ENCODE measurements at regions of chr3 and their contacts with region 1.

Region 1: GRCh38 chr3:98602078-98602678 is 8.8 kb upstream of the CPOX start:
- DNase-seq: peak; percentile 33
- H3K4me3 Mint-ChIP-seq: no peak overlapping the region
- H3K27ac Mint-ChIP-seq: no peak overlapping the region
- H3K4me1 Mint-ChIP-seq: no peaks in the 10 kb centered on the region
- H3K27me3 Mint-ChIP-seq: no peaks in the 10 kb centered on the region
- CTCF ChIP-seq: peak; percentile 47

Region 2: DNA sequence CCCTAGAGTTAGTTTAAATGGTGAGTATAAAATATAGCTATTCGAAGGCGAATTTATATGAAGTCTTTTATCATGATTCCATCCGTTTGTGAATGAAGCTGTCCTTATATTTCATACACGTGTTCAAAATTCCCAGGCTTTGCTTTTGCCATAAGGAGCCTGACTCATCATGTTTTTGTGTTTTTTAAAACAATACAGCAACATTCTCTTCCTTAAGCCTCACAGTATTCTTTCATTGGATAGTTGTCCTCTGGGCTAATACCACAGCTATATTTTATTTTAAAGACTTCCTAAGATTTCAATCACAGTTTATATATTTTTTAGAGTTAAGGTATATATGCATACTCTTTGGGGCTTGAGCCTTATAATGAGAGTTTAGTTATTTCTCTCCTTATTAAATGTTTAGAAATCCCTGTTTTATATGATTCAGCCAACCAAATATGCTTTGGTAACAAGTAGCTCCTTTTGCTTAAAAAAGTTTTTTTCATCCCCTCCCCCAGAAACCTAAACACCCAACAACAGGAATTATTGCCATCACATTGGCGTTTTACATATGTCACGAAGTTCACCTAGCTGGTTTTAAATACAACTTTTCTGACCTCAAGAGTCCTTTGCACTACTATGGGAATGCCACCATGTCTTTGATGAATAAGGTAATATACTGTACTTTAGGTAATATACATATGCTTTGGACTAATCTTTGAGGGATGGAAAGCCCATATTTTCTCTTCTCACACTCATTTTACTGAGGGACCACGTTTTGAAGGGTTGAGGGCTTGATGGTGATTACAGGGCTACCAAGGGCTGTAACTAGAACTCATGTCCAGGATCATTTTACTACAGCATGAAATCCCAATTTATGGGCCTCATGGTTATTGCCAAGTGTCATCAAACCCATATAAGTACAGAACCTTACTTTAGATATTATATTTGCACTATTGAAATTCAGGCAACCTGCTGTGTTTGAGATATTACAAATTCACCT is 189.5 kb after region 1 on chr3:
- CTCF ChIA-PET with region 1: no interaction called
- intact Hi-C with region 1: loop called (anchors 5 kb)
- DNase-seq: no peak
- H3K4me3 Mint-ChIP-seq: no peak overlapping the region
- H3K27ac Mint-ChIP-seq: peak overlapping the region; percentile 78
- H3K4me1 Mint-ChIP-seq: peaks cover 4% of the 10 kb centered on the region
- H3K27me3 Mint-ChIP-seq: no peaks in the 10 kb centered on the region
- CTCF ChIP-seq: no peak

Region 3: DNA sequence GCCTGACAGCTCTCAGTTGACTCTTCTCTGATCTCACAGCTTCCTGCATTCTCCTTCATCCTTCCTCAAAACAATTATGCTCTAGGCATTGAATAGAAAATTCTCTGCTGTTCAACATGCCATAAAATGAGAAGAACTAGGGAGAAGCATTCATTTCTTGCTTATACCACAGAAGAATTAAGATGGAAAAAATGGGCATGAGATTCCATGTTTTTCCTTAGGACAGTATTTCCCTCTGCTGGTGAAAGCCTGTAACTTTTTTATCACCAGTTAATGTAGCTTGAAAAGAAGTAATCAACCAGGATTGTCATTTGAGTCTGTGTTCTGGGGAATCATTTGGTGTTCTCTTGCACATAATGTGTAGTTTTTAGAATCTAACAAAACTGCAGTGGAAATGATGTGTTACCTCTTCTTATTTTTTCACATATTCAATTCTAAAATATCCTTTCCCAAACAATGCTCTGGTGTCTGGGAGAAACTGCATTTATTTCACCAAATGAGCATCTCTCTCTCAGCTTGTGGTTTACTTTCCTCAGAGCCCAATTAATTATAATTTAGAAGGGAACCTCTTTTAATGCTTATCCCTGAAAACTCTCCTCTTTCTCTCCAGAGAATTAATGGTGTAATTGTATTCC is 392.1 kb after region 1 on chr3:
- CTCF ChIA-PET with region 1: interaction called, 14 read pairs
- intact Hi-C with region 1: loop called (anchors 2 kb)
- DNase-seq: no peak
- H3K4me3 Mint-ChIP-seq: no peak overlapping the region
- H3K27ac Mint-ChIP-seq: no peak overlapping the region
- H3K4me1 Mint-ChIP-seq: peaks cover 19% of the 10 kb centered on the region
- H3K27me3 Mint-ChIP-seq: peaks cover 13% of the 10 kb centered on the region
- CTCF ChIP-seq: peak; percentile 31